Activated CD4-positive, alpha-beta memory T cell treated with anti-CD3 and anti-CD28 coated beads for 36 hours (primary cell): ENCODE measurements at regions of chr3 and their contacts with region 1.

Region 1: DNA sequence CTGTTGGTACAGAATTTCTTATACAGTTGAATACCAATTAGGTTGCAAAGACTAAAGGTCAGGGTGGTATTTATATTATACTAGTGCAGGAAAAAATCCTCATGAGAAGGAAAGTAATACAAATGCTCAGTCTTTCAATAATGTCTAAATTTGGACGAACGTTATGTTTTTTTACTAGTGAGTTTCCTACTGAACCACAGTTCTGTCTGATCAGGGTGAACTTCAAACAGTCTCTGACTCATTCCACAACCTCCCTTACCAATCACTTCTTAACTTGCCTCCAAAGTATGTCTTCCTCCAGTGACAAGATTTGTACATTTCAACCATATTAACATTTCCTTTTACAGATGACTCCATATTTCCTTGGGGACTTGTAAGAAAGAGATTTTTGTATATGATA is 3.4 kb downstream of the TMEM212 start:
- DNase-seq: no peak
- H3K4me3 Mint-ChIP-seq: no peak overlapping the region
- H3K27ac Mint-ChIP-seq: no peak overlapping the region
- H3K4me1 Mint-ChIP-seq: peaks cover 7% of the 10 kb centered on the region
- H3K27me3 Mint-ChIP-seq: peaks cover 4% of the 10 kb centered on the region

Region 2: DNA sequence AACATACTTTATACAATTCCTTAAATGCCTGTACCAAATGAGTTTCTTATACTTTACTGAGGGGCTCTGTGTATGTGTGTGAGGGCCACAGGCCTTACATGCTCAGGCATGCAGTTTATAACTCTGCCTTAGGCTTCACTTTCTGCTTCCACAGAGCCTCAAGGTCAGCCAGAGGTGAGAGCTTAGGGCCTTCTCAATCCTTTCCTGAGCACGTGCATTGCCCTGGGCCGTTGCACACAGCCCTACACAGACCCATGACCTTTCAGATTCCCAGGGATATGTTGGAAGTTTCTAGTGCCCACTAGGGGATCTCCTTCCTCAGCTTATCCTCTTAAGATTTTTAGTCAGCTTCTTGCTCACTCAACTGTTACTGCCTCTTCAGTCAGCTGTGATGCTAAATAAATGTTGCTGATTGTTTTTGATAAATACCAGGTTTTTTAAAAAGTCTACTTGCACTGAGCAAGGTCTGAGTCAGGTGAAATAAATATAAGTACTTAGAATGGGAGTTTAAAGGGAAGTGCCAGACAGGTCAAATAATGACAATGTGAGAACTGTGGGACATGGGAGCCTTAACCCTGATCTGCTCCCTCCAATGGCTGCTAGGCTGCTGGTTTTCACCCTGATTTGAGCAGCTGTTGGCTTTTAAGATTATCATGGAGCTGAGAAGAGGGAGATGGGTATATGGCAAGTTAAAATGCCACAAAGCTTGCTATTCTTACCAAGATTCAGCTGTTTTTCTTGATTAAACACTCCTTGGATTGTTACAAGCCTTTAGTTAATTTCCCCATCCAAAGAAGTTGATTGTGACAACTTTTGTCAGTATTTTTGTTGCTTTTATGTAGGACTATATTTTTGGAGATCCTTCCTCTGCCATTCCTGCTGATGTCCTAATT is 205.8 kb before region 1 on chr3:
- CTCF ChIA-PET with region 1: no interaction called
- POLR2A ChIA-PET with region 1: no interaction called
- intact Hi-C with region 1: no loop called
- DNase-seq: no peak
- H3K4me3 Mint-ChIP-seq: no peak overlapping the region
- H3K27ac Mint-ChIP-seq: no peak overlapping the region
- H3K4me1 Mint-ChIP-seq: peaks cover 2% of the 10 kb centered on the region
- H3K27me3 Mint-ChIP-seq: no peaks in the 10 kb centered on the region

Region 3: DNA sequence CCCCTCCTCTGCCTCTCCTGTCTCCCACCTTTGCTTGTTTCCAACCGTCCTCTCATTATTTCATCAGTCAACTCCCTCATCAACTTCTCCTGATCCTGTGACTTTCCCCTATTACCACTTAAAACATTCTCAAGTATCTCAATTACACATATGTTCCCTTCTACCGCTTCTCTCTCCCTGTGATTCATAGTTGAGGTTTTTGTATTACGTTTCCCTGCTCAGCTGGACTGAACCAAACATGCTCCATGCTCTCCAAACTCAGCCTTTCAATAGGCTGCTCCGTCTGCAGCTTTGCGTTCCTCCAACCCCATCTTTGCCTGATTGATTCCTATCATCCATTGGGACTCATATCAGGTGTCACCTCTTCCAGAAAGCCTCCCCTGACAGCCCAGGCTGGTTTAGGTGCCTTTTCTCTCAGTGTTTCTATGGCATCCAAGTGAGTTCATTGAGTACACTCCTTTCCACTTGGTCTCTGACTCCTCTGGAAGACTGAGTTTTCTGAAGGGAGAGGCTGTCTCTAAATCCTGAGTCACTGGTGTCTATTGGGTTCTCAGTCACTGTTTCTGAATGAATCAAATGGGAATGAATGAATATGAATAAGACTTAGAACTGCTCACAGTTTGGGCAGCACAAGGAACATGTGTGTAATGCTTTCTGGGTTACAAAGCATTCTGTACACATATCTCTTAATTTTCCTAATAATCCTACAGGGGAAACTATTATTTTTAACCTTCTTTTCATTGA is 92.8 kb before region 1 on chr3:
- CTCF ChIA-PET with region 1: no interaction called
- POLR2A ChIA-PET with region 1: no interaction called
- intact Hi-C with region 1: loop called (anchors 1 kb)
- DNase-seq: no peak
- H3K4me3 Mint-ChIP-seq: no peak overlapping the region
- H3K27ac Mint-ChIP-seq: no peak overlapping the region
- H3K4me1 Mint-ChIP-seq: no peaks in the 10 kb centered on the region
- H3K27me3 Mint-ChIP-seq: peaks cover 18% of the 10 kb centered on the region

Region 4: GRCh38 chr3:171822431-171823106 is 24.0 kb before region 1 on chr3:
- CTCF ChIA-PET with region 1: interaction called, 3 read pairs
- POLR2A ChIA-PET with region 1: no interaction called
- intact Hi-C with region 1: loop called (anchors 2 kb)
- DNase-seq: no peak
- H3K4me3 Mint-ChIP-seq: no peak overlapping the region
- H3K27ac Mint-ChIP-seq: no peak overlapping the region
- H3K4me1 Mint-ChIP-seq: peaks cover 15% of the 10 kb centered on the region
- H3K27me3 Mint-ChIP-seq: no peaks in the 10 kb centered on the region

Region 5: DNA sequence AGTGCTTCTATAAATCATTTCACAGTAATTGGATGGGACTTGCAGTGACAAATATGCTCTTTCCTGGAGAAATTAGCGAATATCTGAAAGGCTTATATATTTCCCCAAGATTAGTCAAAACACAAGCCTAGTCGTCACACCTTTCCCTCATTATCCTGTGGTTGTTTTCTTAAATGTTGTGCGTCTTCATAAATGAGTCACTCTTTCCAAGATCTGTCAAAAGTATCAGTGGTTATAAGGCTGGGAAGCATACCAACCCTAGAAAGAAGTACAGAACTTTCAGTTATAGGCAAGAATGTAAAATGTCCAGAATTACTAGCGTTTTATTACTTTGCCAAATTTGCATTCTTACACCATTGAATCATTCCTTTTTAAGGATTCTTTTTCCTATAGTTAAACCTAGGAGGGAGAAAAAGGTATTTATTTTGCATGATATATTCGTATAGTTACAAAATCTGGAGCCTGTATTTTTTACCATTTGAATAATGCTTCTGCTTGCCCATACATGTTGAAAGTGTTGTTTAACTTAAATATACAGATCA is 30.2 kb after region 1 on chr3:
- CTCF ChIA-PET with region 1: no interaction called
- POLR2A ChIA-PET with region 1: no interaction called
- intact Hi-C with region 1: loop called (anchors 2 kb)
- DNase-seq: no peak
- H3K4me3 Mint-ChIP-seq: no peak overlapping the region
- H3K27ac Mint-ChIP-seq: no peak overlapping the region
- H3K4me1 Mint-ChIP-seq: peaks cover 9% of the 10 kb centered on the region
- H3K27me3 Mint-ChIP-seq: peaks cover 11% of the 10 kb centered on the region